K562 (cell line): ENCODE measurements at regions of chr2 and their contacts with region 1.

Region 1: DNA sequence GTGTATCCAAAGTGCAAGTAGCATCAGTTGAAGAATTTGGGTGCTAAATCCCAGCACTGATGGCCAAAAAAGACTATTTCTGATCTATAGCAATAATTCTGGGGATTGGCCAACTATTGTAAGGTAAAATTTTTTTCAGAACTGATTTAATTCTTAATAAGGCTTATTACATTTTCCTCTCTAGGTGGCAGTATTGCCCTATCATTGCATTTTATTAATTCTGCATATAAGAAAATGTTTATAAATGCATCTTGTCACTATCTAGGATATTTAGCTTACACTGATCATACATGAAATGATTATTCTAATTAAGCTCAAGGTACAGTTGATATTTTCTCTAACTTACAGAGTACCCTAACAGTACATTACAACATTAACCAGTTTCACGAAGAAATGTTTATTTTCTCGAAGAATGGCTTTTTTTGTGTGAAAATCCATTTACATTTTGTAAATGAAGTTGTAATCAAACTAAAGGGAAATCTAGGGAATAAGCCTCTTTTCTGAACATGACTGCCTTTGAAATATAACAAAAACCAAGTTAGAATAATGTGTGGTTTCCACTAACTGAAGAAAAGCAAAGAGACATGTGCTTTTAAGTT is 11.0 kb downstream of the TTN start:
- DNase-seq: peak in 2 of 4 experiments; percentile 16 to 19
- ATAC-seq: no peak
- H3K4me3 ChIP-seq: no peak overlapping the region
- H3K27ac ChIP-seq: no peak overlapping the region
- H3K4me1 ChIP-seq: no peaks in the 10 kb centered on the region
- H3K27me3 ChIP-seq: peaks cover 4 to 8% of the 10 kb centered on the region in 2 experiments; a peak in 3 of 5 replicates
- CTCF ChIP-seq: peak; percentile 31 to 75 (median 42); a peak in 3 of 6 replicates
- EP300 ChIP-seq: no peak
- POLR2A ChIP-seq: no peak
- RAD21 ChIP-seq: peak; percentile 65 to 82

Region 2: GRCh38 chr2:178152033-178152432 is 644.1 kb before region 1 on chr2:
- CTCF ChIA-PET with region 1: no interaction called
- POLR2A ChIA-PET with region 1: no interaction called
- in situ Hi-C with region 1: no loop called
- intact Hi-C with region 1: no loop called
- DNase-seq: no peak
- ATAC-seq: no peak
- H3K4me3 ChIP-seq: no peak overlapping the region
- H3K27ac ChIP-seq: no peak overlapping the region
- H3K4me1 ChIP-seq: no peaks in the 10 kb centered on the region
- H3K27me3 ChIP-seq: peaks cover 2 to 4% of the 10 kb centered on the region in 2 experiments; a peak in 1 of 5 replicates
- CTCF ChIP-seq: no peak
- EP300 ChIP-seq: no peak
- POLR2A ChIP-seq: no peak
- RAD21 ChIP-seq: no peak

Region 3: DNA sequence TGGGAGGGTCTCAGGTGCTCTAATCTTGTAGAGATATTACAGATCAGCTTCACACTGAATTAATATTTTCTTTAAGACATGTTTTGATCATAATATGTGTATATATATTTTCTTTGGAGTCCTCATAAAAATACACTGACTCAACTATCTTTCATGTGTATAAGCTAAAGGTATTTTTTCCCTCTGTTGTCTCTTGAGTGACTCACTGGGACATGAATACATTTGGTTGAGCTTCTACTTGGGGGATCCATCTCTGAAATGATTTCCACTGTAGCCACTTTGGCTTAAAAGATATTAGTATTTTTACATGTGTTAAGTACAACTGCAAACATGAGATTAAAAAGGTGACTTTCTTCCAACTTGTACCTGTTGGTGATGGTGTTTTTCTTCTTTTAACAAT is 129.7 kb before region 1 on chr2:
- CTCF ChIA-PET with region 1: no interaction called
- POLR2A ChIA-PET with region 1: no interaction called
- in situ Hi-C with region 1: no loop called
- intact Hi-C with region 1: no loop called
- DNase-seq: no peak
- ATAC-seq: no peak
- H3K4me3 ChIP-seq: no peak overlapping the region
- H3K27ac ChIP-seq: no peak overlapping the region
- H3K4me1 ChIP-seq: no peaks in the 10 kb centered on the region
- H3K27me3 ChIP-seq: 0 out of 5 replicates have a peak, but pooled peaks cover 0 to 2% of the 10 kb centered on the region in 2 experiments
- CTCF ChIP-seq: no peak
- EP300 ChIP-seq: no peak
- POLR2A ChIP-seq: no peak
- RAD21 ChIP-seq: no peak

Region 4: DNA sequence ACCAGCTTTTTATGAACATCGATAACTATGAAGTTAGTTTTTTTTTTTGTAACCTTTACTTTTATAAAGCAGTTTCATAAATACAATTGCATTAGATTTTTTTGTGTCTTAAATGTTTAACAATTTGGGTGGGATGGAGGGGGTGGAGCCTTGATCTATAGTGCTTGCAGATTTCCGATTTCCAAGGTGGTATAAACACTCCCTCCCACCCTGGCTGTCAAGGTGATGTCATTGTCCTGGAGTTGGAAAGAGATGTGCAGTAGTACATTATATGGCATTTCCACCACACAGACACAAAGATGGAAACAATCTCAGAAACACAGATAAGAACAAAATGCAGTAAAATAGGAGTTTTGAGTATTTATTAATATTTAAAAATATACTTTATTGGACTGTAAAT is 103.3 kb before region 1 on chr2:
- CTCF ChIA-PET with region 1: no interaction called
- POLR2A ChIA-PET with region 1: no interaction called
- in situ Hi-C with region 1: no loop called
- intact Hi-C with region 1: no loop called
- DNase-seq: no peak
- ATAC-seq: no peak
- H3K4me3 ChIP-seq: no peak overlapping the region
- H3K27ac ChIP-seq: no peak overlapping the region
- H3K4me1 ChIP-seq: no peaks in the 10 kb centered on the region
- H3K27me3 ChIP-seq: 0 out of 5 replicates have a peak, but pooled peaks cover 0 to 2% of the 10 kb centered on the region in 2 experiments
- CTCF ChIP-seq: no peak
- EP300 ChIP-seq: no peak
- POLR2A ChIP-seq: no peak
- RAD21 ChIP-seq: no peak

Region 5: GRCh38 chr2:178914259-178914849 is 118.2 kb after region 1 on chr2:
- CTCF ChIA-PET with region 1: interaction called, 3 read pairs
- POLR2A ChIA-PET with region 1: no interaction called
- in situ Hi-C with region 1: loop called (anchors 10 kb)
- intact Hi-C with region 1: loop called (anchors 1 kb)
- DNase-seq: peak; percentile 65 to 83 (median 72)
- ATAC-seq: peak; percentile 99
- H3K4me3 ChIP-seq: no peak overlapping the region
- H3K27ac ChIP-seq: no peak overlapping the region
- H3K4me1 ChIP-seq: no peaks in the 10 kb centered on the region
- H3K27me3 ChIP-seq: no peaks in the 10 kb centered on the region
- CTCF ChIP-seq: peak; percentile 85 to 89 (median 87)
- EP300 ChIP-seq: no peak
- POLR2A ChIP-seq: no peak
- RAD21 ChIP-seq: peak; percentile 77 to 85

Region 6: DNA sequence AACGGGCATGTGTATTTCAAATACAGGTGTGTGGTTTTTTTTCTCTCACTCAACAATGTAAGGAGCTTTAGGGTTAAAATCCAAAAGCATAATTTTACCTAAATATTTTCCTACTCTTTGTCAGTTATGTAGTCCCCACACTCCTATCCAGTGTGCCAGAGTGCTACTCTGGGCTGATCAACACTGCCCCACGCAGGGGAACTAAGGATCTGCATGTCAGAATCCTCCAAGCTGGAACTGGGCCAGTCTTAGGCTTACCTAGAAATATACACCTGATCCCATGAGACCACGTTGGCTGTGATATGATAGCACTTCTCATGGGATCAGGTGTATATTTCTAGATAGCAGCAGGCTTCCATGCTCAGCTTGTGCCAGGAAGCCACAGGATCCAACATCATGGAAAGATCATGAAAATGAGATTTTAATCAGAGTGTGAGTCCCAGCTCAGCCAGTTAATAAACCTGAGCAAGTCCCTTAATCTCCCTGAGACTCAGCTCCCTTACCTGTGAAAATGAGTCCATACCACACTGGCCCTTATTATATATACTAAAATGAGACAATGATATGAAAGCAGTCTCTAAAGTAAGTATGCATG is 224.1 kb after region 1 on chr2:
- CTCF ChIA-PET with region 1: no interaction called
- POLR2A ChIA-PET with region 1: no interaction called
- in situ Hi-C with region 1: no loop called
- intact Hi-C with region 1: no loop called
- DNase-seq: peak in 3 of 4 experiments; percentile 22 to 28 (median 27)
- ATAC-seq: peak; percentile 83
- H3K4me3 ChIP-seq: no peak overlapping the region
- H3K27ac ChIP-seq: no peak overlapping the region
- H3K4me1 ChIP-seq: no peaks in the 10 kb centered on the region
- H3K27me3 ChIP-seq: no peaks in the 10 kb centered on the region
- CTCF ChIP-seq: peak in 2 of 3 experiments; percentile 30 to 39; a peak in 3 of 6 replicates
- EP300 ChIP-seq: no peak
- POLR2A ChIP-seq: no peak
- RAD21 ChIP-seq: peak in 1 of 2 experiments; percentile 35; a peak in 1 of 4 replicates